Activated CD4-positive, alpha-beta T cell treated with anti-CD3 and anti-CD28 coated beads, Interleukin-2, amount 10 ng/mL, durations not matched to agents 24 days and 14 days (primary cell): ENCODE measurements at regions of chr2 and their contacts with region 1.

Region 1: GRCh38 chr2:17851731-17852585 is 26.5 kb upstream of the KCNS3 start:
- DNase-seq: peak; percentile 75
- H3K4me3 Mint-ChIP-seq: no peak overlapping the region
- H3K27ac Mint-ChIP-seq: no peak overlapping the region
- H3K4me1 Mint-ChIP-seq: no peaks in the 10 kb centered on the region
- H3K27me3 Mint-ChIP-seq: peaks cover 14% of the 10 kb centered on the region

Region 2: DNA sequence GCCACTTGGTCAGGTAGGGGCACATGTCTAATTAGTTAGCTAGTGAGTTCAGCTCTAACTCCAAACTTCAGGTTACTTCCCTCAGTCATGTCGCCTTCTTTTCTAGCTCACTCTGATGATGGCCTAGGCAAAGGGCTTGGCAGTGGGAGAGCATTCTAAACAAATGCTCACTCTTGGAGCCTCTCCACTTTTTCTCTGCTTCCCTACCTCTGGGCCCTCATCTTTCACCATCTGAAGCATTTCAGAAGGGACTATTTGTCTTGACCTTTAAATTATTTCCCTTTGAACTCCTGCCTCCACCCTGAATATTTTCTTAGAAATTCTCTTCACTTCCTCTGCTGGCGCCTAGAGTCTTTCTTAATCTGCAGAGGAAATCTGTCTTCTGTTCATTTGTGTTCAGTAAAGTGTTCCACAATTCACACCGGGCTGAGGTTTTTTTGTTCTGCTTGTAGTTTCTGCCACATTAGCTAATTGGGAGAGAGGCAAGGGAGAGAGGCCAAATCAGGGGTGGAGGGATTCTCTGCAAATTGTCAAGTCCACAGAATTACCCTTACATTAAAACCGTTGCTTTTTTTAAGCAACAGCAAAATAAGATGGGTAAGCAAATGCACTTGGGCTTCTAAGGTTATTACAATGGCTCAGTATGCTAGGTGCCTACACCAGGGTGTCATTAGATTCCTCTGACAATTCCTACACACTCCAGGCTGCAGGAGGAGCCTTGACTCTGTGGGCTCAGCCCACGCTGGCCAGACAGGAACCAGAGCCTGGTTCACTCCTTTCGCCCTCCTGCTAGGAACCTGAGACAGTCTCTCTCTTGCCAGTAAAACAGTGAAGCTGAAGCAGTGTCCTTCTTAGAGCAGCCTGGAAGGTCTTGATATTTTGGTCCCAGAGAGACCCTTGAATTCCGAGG is 30.2 kb before region 1 on chr2:
- intact Hi-C with region 1: no loop called
- DNase-seq: peak; percentile 59
- H3K4me3 Mint-ChIP-seq: peak overlapping the region; percentile 9
- H3K27ac Mint-ChIP-seq: no peak overlapping the region
- H3K4me1 Mint-ChIP-seq: peaks cover 14% of the 10 kb centered on the region
- H3K27me3 Mint-ChIP-seq: peaks cover 25% of the 10 kb centered on the region

Region 3: GRCh38 chr2:18149645-18150246 is 297.8 kb after region 1 on chr2:
- intact Hi-C with region 1: loop called (anchors 2 kb)
- DNase-seq: no peak
- H3K4me3 Mint-ChIP-seq: no peak overlapping the region
- H3K27ac Mint-ChIP-seq: no peak overlapping the region
- H3K4me1 Mint-ChIP-seq: no peaks in the 10 kb centered on the region
- H3K27me3 Mint-ChIP-seq: no peaks in the 10 kb centered on the region

Region 4: GRCh38 chr2:18178736-18179349 is 326.9 kb after region 1 on chr2:
- intact Hi-C with region 1: loop called (anchors 2 kb)
- DNase-seq: peak; percentile 78
- H3K4me3 Mint-ChIP-seq: no peak overlapping the region
- H3K27ac Mint-ChIP-seq: no peak overlapping the region
- H3K4me1 Mint-ChIP-seq: no peaks in the 10 kb centered on the region
- H3K27me3 Mint-ChIP-seq: no peaks in the 10 kb centered on the region

Region 5: DNA sequence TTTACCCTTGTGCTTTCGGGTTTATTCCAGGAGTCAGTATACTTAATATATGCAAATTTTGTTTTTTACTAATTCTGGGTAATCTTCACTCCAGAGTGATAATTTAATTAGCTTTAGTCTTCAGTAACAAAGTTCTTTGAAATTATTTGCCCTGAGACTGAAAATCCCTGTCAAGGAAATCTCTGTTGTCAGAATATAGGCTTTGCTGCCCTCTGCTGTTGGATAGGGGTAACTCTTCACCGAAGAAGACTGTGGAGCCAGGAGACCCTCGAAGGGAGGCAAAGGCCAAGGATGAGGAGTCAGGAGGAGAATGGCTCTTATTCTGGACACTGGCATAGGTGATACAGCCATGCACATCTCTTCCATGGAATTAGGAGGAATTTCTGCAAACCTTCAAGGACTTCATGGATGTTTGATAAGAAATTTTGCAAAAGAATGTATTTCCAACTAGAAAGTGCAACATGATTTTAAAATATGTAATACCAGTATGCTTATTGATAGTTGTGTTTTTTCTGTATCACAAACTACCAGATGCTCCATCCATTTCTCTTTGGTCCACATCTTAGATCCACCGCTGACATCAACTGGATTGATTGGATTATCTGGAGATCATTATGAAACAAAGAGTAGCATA is 526.2 kb after region 1 on chr2:
- intact Hi-C with region 1: loop called (anchors 5 kb)
- DNase-seq: peak; percentile 64
- H3K4me3 Mint-ChIP-seq: no peak overlapping the region
- H3K27ac Mint-ChIP-seq: no peak overlapping the region
- H3K4me1 Mint-ChIP-seq: no peaks in the 10 kb centered on the region
- H3K27me3 Mint-ChIP-seq: peaks cover 9% of the 10 kb centered on the region